ENCODE measurements at regions of chr7 and their contacts with region 1.

Region 1: GRCh38 chr7:64174945-64175344 is 32.1 kb upstream of the ZNF735 start:
- DNase-seq: no peak
- ATAC-seq: no peak
- H3K4me3 ChIP-seq: no peak overlapping the region
- H3K4me3 Mint-ChIP-seq: no peak overlapping the region
- H3K27ac ChIP-seq: no peak overlapping the region
- H3K27ac Mint-ChIP-seq: no peak overlapping the region
- H3K4me1 ChIP-seq: no peaks in the 10 kb centered on the region
- H3K4me1 Mint-ChIP-seq: no peaks in the 10 kb centered on the region
- H3K27me3 ChIP-seq: peaks cover 0 to 2% of the 10 kb centered on the region in 2 experiments
- H3K27me3 Mint-ChIP-seq: peaks cover under 1% of the 10 kb centered on the region
- CTCF ChIP-seq: no peak

Region 2: GRCh38 chr7:63953181-63953580 is 221.8 kb before region 1 on chr7:
- CTCF ChIA-PET with region 1: no interaction called
- POLR2A ChIA-PET with region 1: no interaction called
- intact Hi-C with region 1: loop called in 1 of 2 experiments (anchors 5 kb)
- DNase-seq: no peak
- ATAC-seq: no peak
- H3K4me3 ChIP-seq: no peak overlapping the region
- H3K4me3 Mint-ChIP-seq: no peak overlapping the region
- H3K27ac ChIP-seq: no peak overlapping the region
- H3K27ac Mint-ChIP-seq: no peak overlapping the region
- H3K4me1 ChIP-seq: no peaks in the 10 kb centered on the region
- H3K4me1 Mint-ChIP-seq: no peaks in the 10 kb centered on the region
- H3K27me3 ChIP-seq: no peaks in the 10 kb centered on the region
- H3K27me3 Mint-ChIP-seq: no peaks in the 10 kb centered on the region
- CTCF ChIP-seq: no peak